K562 (cell line): ENCODE measurements at regions of chr1 and their contacts with region 1.

Region 1: DNA sequence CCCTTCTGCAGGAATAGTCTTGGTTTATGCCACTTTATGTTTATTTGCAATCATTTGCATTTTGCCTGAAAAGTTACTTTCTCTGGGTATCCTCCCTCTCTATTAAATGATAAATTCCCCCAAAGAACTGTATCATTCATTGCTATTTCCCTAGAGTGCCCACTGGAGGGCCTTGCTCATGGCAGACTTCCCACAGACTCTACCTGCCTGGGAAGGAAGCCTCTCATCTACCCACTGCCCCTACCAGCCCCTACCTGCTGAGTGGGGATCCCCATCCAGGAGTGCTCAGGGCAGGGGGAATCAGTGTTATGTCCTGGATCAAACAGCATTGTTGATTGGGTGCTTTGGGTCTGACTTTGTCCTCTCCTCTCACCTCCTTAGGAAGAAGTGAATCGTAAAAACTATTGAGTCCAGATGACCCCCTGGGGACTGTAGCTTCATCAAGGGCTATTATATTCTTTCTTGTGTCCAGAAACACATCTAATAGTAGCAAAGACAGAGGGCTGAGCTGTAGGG is 6.8 kb upstream of the LRRN2 start:
- DNase-seq: peak in 1 of 4 experiments; percentile 38
- ATAC-seq: peak; percentile 68
- H3K4me3 ChIP-seq: no peak overlapping the region
- H3K27ac ChIP-seq: peak overlapping the region; percentile 64
- H3K4me1 ChIP-seq: peaks cover 20 to 42% of the 10 kb centered on the region in 2 experiments
- H3K27me3 ChIP-seq: no peaks in the 10 kb centered on the region
- CTCF ChIP-seq: peak; percentile 38 to 61 (median 53); a peak in 5 of 6 replicates
- EP300 ChIP-seq: no peak
- POLR2A ChIP-seq: no peak
- RAD21 ChIP-seq: peak in 1 of 2 experiments; percentile 20; a peak in 1 of 4 replicates

Region 2: DNA sequence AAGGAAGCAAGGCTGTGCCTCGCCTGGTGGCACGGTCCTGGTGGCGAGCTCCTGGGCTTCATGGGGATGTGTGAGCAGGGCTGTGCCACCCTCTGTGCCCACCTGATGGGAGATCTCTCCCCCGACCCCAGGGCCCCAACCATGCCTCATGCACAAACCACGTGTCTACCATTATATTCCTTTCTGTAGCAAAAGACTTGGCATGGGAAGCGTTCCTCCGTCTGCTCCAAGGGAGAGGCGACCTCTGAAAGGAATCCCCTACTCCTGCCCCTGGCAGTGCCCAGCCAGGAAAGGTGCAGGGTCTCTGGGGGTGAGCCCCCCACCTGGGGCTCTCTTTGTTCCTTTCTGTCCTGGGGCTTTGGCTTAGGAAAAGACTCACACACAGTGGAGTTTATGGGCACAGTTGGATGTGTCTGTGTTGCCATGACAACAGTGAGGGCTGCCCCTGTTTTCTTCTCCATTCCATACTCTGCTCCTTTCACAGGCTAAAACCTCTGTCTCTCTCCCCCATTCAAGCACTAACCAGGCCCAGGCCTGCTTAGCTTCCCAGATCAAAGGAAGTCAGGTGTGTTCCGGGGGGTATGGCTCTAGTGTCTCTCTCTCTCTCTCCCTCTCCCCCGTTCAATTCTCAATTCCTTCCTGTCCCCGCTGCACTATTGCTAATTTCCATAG is 14.6 kb after region 1 on chr1:
- CTCF ChIA-PET with region 1: no interaction called
- POLR2A ChIA-PET with region 1: interaction called, 8 read pairs
- in situ Hi-C with region 1: no loop called
- intact Hi-C with region 1: loop called (anchors 2 kb)
- DNase-seq: peak in 1 of 4 experiments; percentile 27
- ATAC-seq: no peak
- H3K4me3 ChIP-seq: no peak overlapping the region; the same call in 1 of the 2 replicates
- H3K27ac ChIP-seq: peak overlapping the region; percentile 73
- H3K4me1 ChIP-seq: peaks cover 30 to 73% of the 10 kb centered on the region in 2 experiments
- H3K27me3 ChIP-seq: no peaks in the 10 kb centered on the region
- CTCF ChIP-seq: no peak
- EP300 ChIP-seq: no peak
- POLR2A ChIP-seq: no peak
- RAD21 ChIP-seq: no peak